Activated naive CD4-positive, alpha-beta T cell treated with anti-CD3 and anti-CD28 coated beads, Interleukin-2, amount 10 ng/mL, durations not matched to agents 7 days and 5 days (primary cell): ENCODE measurements at regions of chr10 and their contacts with region 1.

Region 1: GRCh38 chr10:91006001-91006751 is 85.3 kb upstream of the ANKRD1 start:
- DNase-seq: peak; percentile 73
- H3K4me3 Mint-ChIP-seq: no peak overlapping the region
- H3K27ac Mint-ChIP-seq: peak overlapping the region; percentile 78
- H3K4me1 Mint-ChIP-seq: peaks cover 33% of the 10 kb centered on the region
- H3K27me3 Mint-ChIP-seq: peaks cover 16% of the 10 kb centered on the region

Region 2: GRCh38 chr10:90988802-90989201 is 17.4 kb before region 1 on chr10:
- CTCF ChIA-PET with region 1: interaction called, 10 read pairs
- DNase-seq: no peak
- H3K4me3 Mint-ChIP-seq: no peak overlapping the region
- H3K27ac Mint-ChIP-seq: no peak overlapping the region
- H3K4me1 Mint-ChIP-seq: no peaks in the 10 kb centered on the region
- H3K27me3 Mint-ChIP-seq: peaks cover 1% of the 10 kb centered on the region

Region 3: DNA sequence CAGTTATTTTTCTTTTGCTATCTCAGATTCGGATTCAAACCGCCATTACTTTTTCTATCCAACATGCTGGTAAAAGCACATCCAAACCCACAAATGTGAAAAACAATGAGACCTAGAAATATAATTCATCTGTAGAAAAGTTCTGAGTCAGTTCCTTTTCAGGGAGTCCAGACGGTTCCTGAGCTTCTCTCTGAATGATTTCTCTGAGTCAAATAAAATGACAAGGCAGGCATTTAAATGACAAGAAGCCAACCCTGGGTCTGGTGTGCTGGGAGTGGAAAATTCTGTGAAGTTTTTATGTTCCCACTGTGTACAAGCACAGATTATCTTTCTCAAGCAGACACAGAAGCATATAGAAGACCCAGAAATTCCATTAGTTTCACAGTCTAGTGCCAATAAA is 11.0 kb after region 1 on chr10:
- CTCF ChIA-PET with region 1: interaction called, 13 read pairs
- DNase-seq: no peak
- H3K4me3 Mint-ChIP-seq: no peak overlapping the region
- H3K27ac Mint-ChIP-seq: no peak overlapping the region
- H3K4me1 Mint-ChIP-seq: no peaks in the 10 kb centered on the region
- H3K27me3 Mint-ChIP-seq: peaks cover 43% of the 10 kb centered on the region

Region 4: DNA sequence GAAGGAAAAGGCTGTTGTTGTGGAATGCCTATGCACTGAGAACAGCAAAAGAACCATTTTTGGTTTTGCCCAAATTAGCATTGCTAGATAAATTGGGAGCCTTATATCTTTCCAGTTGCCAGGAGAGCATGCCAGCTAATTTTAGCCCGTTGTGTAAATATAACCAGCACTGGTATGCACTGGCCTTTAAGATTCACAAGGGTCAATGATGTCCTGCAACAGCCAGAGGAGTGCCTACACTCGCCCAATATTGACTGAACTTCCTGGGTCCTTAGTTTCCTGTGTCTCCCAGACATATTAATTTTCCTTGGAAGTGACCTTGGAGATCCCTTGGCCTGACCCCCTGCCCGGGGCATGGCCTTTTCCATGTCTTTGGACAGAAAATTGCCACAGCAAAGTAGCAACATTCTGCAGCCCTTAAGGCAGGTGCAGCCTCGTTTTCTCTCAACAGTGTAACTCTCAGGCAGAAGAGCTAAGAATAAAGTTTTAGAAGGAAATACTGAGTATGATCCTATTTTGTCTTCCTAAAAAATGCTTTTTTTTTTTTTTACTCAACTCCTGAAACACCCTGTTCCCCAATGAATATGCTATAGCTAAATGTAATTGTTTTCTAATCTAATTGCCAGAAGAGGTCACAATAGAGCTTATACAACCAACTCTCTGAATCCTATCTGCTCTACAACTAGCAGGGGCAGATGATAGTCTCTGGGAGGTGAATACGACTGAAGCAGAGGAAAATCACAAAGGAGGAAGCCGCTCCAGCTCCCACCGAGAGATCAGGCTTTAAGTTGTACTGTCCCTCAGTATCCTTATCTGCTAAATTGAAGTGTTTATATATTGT is 82.3 kb after region 1 on chr10:
- CTCF ChIA-PET with region 1: interaction called, 12 read pairs
- DNase-seq: no peak
- H3K4me3 Mint-ChIP-seq: no peak overlapping the region
- H3K27ac Mint-ChIP-seq: no peak overlapping the region
- H3K4me1 Mint-ChIP-seq: no peaks in the 10 kb centered on the region
- H3K27me3 Mint-ChIP-seq: peaks cover 3% of the 10 kb centered on the region